Panc1 (cell line): ENCODE measurements at regions of chr6 and their contacts with region 1.

Region 1: DNA sequence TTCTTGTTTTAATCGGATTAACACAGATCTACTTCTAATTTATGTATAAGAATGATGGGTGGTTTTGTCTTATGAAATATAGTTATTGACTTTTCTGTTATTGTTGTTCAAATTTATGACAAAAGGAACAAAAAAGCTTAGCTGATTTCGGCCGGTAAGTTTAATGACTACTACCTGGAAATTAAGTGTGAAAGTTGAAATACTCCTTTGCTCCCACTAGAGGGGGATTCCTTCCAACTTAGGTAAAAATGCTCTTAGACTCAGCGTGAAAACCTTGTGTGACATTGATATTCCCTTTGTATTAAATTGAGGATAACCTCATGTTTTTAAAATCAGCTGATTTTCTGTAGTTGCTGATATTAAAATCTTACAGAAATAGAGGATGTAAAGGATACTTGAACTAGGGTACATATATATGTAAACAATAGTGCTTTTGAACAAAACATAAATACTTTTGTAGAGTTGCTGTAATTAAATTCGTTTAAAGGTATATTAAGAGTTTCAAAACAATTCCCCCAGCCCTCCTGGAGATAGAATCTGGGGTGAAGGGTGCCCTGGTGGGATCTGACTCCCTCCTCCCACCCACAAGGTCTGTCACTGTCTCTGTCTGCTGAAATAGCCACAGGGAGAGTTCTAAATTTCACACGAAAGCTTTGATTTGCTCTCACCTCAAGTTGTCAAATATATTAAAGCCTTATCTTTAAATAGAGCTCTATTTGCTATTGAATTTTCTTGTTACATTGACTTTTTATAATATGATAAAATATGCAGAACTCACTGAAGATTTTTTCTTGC is 257.5 kb downstream of the ARID1B start:
- DNase-seq: no peak
- ATAC-seq: peak; percentile 75
- H3K4me3 ChIP-seq: no peak overlapping the region
- H3K27ac ChIP-seq: peak overlapping the region; percentile 95; the same call in 1 of the 2 replicates
- H3K4me1 ChIP-seq: peaks cover 16% of the 10 kb centered on the region; the same call in 1 of the 2 replicates
- H3K27me3 ChIP-seq: no peaks in the 10 kb centered on the region
- CTCF ChIP-seq: peak; percentile 69

Region 2: GRCh38 chr6:157184202-157185020 is 149.8 kb after region 1 on chr6:
- CTCF ChIA-PET with region 1: no interaction called
- POLR2A ChIA-PET with region 1: no interaction called
- in situ Hi-C with region 1: no loop called
- intact Hi-C with region 1: loop called (anchors 5 kb)
- DNase-seq: peak; percentile 7
- ATAC-seq: peak; percentile 92
- H3K4me3 ChIP-seq: no peak overlapping the region
- H3K27ac ChIP-seq: no peak overlapping the region
- H3K4me1 ChIP-seq: peaks cover 3% of the 10 kb centered on the region
- H3K27me3 ChIP-seq: no peaks in the 10 kb centered on the region
- CTCF ChIP-seq: peak; percentile 97